B cell (primary cell): ENCODE measurements at regions of chr6 and their contacts with region 1.

Region 1: DNA sequence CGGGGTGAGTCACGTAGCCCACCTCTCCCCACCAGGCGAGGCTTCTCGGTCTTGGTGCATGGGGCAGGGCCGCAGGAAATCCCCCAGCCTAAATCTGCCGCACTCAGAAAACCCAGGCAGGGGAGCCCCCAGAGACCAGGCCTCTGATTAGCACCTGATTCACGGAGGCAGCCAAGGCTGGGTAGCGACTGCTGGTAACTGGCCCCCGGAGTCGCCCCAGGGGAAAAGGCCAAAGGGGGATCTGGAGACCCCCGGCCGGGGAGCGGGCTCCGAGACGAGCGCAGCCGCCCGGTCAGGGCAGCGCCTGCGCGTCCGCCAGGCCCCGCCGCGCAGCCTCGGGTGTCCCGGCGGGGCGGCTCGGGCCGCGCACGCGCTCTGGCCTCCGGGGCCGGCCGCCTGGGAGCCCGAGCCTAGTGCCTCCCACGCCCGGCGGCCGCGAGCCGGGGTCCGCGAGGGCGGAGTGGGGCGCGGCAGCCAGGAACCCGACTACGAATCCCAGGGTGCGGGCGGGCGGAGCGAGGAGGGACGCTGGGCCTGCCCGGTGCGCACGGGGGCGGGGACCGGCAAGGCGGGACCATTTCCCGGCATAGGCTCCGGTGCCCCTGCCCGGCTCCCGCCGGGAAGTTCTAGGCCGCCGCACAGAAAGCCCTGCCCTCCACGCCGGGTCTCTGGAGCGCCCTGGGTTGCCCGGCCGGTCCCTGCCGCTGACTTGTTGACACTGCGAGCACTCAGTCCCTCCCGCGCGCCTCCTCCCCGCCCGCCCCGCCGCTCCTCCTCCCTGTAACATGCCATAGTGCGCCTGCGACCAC is at the start of gene DUSP22:
- DNase-seq: peak; percentile 97
- ATAC-seq: peak; percentile 55
- H3K4me3 ChIP-seq: peak within 1 kb of the TSS; percentile 50 to 87 (median 78)
- H3K4me3 Mint-ChIP-seq: peak within 1 kb of the TSS; percentile 99
- H3K27ac ChIP-seq: peak within 1 kb of the TSS; percentile 93 to 95
- H3K27ac Mint-ChIP-seq: peak within 1 kb of the TSS; percentile 96
- H3K4me1 ChIP-seq: peaks cover 81 to 90% of the 10 kb centered on the region in 2 donors
- H3K4me1 Mint-ChIP-seq: peaks cover 58% of the 10 kb centered on the region
- H3K27me3 ChIP-seq: no peaks in the 10 kb centered on the region
- H3K27me3 Mint-ChIP-seq: no peaks in the 10 kb centered on the region
- CTCF ChIP-seq: no peak
- total RNA-seq, gene DUSP22: 133 and 134 TPM in 2 replicates

Region 2: GRCh38 chr6:227074-227782 is 64.7 kb before region 1 on chr6:
- CTCF ChIA-PET with region 1: interaction called, 15 read pairs
- POLR2A ChIA-PET with region 1: no interaction called
- intact Hi-C with region 1: no loop called
- DNase-seq: peak; percentile 78
- ATAC-seq: peak; percentile 92
- H3K4me3 ChIP-seq: no peak overlapping the region
- H3K4me3 Mint-ChIP-seq: peak overlapping the region; percentile 42
- H3K27ac ChIP-seq: no peak overlapping the region
- H3K27ac Mint-ChIP-seq: peak overlapping the region; percentile 20
- H3K4me1 ChIP-seq: peaks cover 28 to 34% of the 10 kb centered on the region in 2 donors
- H3K4me1 Mint-ChIP-seq: peaks cover 43% of the 10 kb centered on the region
- H3K27me3 ChIP-seq: no peaks in the 10 kb centered on the region
- H3K27me3 Mint-ChIP-seq: no peaks in the 10 kb centered on the region
- CTCF ChIP-seq: peak; percentile 45

Region 3: DNA sequence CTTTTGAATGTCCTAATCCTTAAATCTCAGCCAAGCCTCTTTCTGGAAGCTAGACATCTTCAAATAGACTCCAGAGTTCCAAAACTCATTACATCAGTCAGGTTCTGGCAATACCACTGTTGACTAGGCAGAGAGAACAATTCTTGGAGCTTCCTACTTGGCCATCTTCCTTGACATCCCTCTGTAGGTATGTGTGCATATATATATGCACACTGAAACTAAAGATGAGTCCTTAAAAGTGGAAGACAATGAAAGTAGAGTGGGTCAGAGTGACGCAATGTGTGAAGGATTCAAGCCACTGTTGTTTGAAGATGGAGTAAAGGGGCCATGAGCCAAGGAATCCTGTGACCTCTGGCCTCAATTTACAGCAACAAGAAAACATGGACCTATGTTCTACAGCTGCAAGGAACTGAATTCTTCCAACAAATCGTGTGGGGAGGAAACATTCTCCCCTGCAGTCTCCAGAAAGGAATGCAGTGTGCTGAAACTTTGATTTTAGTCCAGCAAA is 18.3 kb before region 1 on chr6:
- CTCF ChIA-PET with region 1: no interaction called
- POLR2A ChIA-PET with region 1: no interaction called
- intact Hi-C with region 1: loop called (anchors 2 kb)
- DNase-seq: no peak
- ATAC-seq: no peak
- H3K4me3 ChIP-seq: no peak overlapping the region
- H3K4me3 Mint-ChIP-seq: no peak overlapping the region
- H3K27ac ChIP-seq: no peak overlapping the region
- H3K27ac Mint-ChIP-seq: no peak overlapping the region
- H3K4me1 ChIP-seq: peaks cover 30 to 45% of the 10 kb centered on the region in 2 donors
- H3K4me1 Mint-ChIP-seq: peaks cover 32% of the 10 kb centered on the region
- H3K27me3 ChIP-seq: no peaks in the 10 kb centered on the region
- H3K27me3 Mint-ChIP-seq: no peaks in the 10 kb centered on the region
- CTCF ChIP-seq: no peak

Region 4: DNA sequence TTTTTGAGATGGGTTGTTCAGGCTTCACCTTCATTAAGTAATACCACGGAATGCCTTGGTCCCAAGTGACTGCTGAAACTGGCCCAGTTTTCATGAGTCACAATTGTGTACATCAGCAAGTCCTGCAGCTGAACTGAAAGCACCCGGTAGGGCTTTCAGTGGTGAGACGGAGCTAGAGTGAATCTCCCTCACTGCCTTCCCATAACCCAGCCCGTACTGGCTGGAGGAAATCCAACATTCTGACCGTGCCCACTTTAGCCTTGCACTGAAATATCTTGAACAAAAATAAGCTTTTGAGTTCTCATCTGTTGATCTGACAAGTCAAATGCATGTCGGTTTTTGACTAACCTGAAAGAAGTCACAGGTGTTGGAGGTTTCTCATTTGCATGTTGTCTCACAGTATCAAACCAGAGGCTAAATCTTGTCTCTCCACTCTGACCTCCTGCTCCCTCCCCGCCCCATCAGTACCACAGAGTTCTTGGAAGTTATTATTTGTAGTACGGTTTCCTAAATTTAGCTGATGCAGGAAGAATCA is 36.3 kb after region 1 on chr6:
- CTCF ChIA-PET with region 1: interaction called, 9 read pairs
- POLR2A ChIA-PET with region 1: interaction called, 11 read pairs
- intact Hi-C with region 1: no loop called
- DNase-seq: peak; percentile 62
- ATAC-seq: peak; percentile 77
- H3K4me3 ChIP-seq: peak overlapping the region in 3 of 5 experiments; percentile 18 to 32 (median 32)
- H3K4me3 Mint-ChIP-seq: no peak overlapping the region
- H3K27ac ChIP-seq: peak overlapping the region in 1 of 2 donors; percentile 2
- H3K27ac Mint-ChIP-seq: no peak overlapping the region
- H3K4me1 ChIP-seq: peaks cover 41 to 70% of the 10 kb centered on the region in 2 donors
- H3K4me1 Mint-ChIP-seq: peaks cover 3% of the 10 kb centered on the region
- H3K27me3 ChIP-seq: no peaks in the 10 kb centered on the region
- H3K27me3 Mint-ChIP-seq: no peaks in the 10 kb centered on the region
- CTCF ChIP-seq: no peak

Region 5: DNA sequence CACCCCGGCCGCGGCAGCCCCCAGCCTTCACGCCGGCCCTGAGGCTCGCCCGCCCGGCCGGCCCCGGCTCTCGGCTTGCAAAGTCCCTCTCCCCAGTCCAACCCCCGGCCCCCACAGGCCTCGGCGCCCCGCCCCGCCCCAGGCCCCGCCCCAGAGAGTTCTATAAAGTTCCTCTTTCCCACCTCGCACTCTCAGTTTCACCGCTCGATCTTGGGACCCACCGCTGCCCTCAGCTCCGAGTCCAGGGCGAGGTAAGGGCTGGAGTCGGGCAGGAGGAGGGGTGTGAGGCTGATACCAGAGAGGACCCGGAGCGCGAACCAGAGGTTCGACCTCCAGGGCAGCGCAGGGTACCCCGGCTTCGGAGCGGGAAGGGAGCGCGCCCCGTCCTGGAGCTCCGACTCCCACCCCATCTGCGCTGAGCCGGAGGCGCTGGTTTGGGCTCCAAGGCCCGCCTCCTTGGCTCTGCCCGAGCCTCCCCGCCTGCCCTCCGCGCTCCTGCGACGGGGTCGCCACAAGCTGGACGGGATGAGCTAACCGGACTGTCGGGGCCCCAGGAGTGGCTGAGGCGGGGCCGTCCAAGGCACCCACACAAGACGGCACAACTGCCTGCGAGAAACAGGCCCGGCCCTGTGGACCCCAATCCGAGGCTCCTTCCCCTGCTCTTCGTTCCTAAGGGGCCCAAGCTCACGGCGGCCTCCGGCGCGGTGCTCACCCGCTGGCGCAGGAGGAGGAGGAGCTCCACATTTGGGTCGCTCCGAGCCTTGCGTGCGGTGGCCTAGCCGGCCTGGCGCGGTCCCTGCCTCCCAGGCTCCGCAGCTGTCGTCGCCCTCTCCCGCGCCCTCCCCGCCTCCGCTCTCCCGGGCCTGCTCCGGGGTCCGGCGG is 99.9 kb after region 1 on chr6 and contains the start of gene IRF4:
- CTCF ChIA-PET with region 1: interaction called, 6 read pairs
- POLR2A ChIA-PET with region 1: interaction called, 23 read pairs
- intact Hi-C with region 1: loop called (anchors 1 kb)
- DNase-seq: peak; percentile 90
- ATAC-seq: peak; percentile 70
- H3K4me3 ChIP-seq: peak within 1 kb of the TSS; percentile 63 to 98 (median 93)
- H3K4me3 Mint-ChIP-seq: peak within 1 kb of the TSS; percentile 95
- H3K27ac ChIP-seq: peak within 1 kb of the TSS; percentile 71 to 82
- H3K27ac Mint-ChIP-seq: peak within 1 kb of the TSS; percentile 99
- H3K4me1 ChIP-seq: peaks cover 35 to 43% of the 10 kb centered on the region in 2 donors
- H3K4me1 Mint-ChIP-seq: peaks cover 51% of the 10 kb centered on the region
- H3K27me3 ChIP-seq: no peaks in the 10 kb centered on the region
- H3K27me3 Mint-ChIP-seq: no peaks in the 10 kb centered on the region
- CTCF ChIP-seq: no peak
- total RNA-seq, gene IRF4: 129 and 142 TPM in 2 replicates

Region 6: GRCh38 chr6:422433-423054 is 130.6 kb after region 1 on chr6:
- CTCF ChIA-PET with region 1: no interaction called
- POLR2A ChIA-PET with region 1: no interaction called
- intact Hi-C with region 1: no loop called
- DNase-seq: no peak
- ATAC-seq: peak; percentile 90
- H3K4me3 ChIP-seq: no peak overlapping the region
- H3K4me3 Mint-ChIP-seq: no peak overlapping the region
- H3K27ac ChIP-seq: no peak overlapping the region
- H3K27ac Mint-ChIP-seq: peak overlapping the region; percentile 50
- H3K4me1 ChIP-seq: peaks cover 0 to 3% of the 10 kb centered on the region in 2 donors
- H3K4me1 Mint-ChIP-seq: peaks cover 9% of the 10 kb centered on the region
- H3K27me3 ChIP-seq: no peaks in the 10 kb centered on the region
- H3K27me3 Mint-ChIP-seq: no peaks in the 10 kb centered on the region
- CTCF ChIP-seq: no peak